Head of caudate nucleus (tissue), 42 donors: ENCODE measurements at regions of chr3 and their contacts with region 1.

Region 1: GRCh38 chr3:126267226-126267975 is 87.0 kb upstream of the ALDH1L1 start:
- DNase-seq: peak; percentile 43 to 89 (median 74)

Region 2: GRCh38 chr3:126357295-126358037 is 90.1 kb after region 1 on chr3 and contains the start of gene KLF15:
- intact Hi-C with region 1: loop called (anchors 5 kb)
- DNase-seq: peak; percentile 72 to 97 (median 93)